ENCODE measurements at regions of chr16 and their contacts with region 1.

Region 1: GRCh38 chr16:28616636-28617035 is 6.8 kb upstream of the SULT1A1 start:
- DNase-seq: no peak
- H3K4me3 ChIP-seq: no peak overlapping the region
- H3K27me3 ChIP-seq: no peaks in the 10 kb centered on the region; the same call in 1 of the 2 replicates
- CTCF ChIP-seq: no peak

Region 2: GRCh38 chr16:28494121-28494851 is 122.3 kb before region 1 on chr16 and contains the start of gene APOBR:
- CTCF ChIA-PET with region 1: interaction called, 10 read pairs
- POLR2A ChIA-PET with region 1: no interaction called
- DNase-seq: no peak
- H3K4me3 ChIP-seq: no peak within 1 kb of the TSS
- H3K27me3 ChIP-seq: no peaks in the 10 kb centered on the region
- CTCF ChIP-seq: no peak
- polyA plus RNA-seq, gene APOBR: 0.02 TPM in 1 of 2 replicates, not detected in the other

Measured in BJ (cell line).